ENCODE measurements at regions of chr3 and their contacts with region 1.

Region 1: DNA sequence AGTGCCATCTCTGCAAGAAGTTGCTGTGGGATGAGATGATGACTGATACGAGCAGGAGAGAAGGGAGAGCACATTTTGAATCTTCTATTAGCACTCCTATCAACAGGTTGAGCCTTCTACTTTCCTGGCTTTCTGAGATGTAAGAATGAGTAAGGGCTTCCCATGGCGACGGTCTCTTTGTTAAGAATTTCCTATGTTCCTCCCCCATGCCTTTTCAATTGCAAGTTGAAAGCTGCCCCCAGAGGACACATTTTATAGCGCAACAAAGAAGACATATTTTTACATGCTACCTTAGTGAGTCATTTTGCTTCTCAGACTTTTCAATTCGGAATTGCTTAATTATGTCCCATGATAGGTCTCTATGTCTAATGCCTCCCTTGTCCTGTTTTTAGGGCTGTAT is 71.3 kb upstream of the LRTM1 start:
- DNase-seq: peak; percentile 33 to 71
- H3K4me3 ChIP-seq: no peak overlapping the region
- H3K27ac ChIP-seq: no peak overlapping the region
- H3K4me1 ChIP-seq: peaks cover 4% of the 10 kb centered on the region; the same call in 1 of the 2 replicates
- H3K27me3 ChIP-seq: no peaks in the 10 kb centered on the region
- CTCF ChIP-seq: peak; percentile 48; the same call in 1 of the 2 replicates

Region 2: GRCh38 chr3:54891548-54892120 is 107.5 kb before region 1 on chr3:
- CTCF ChIA-PET with region 1: no interaction called
- POLR2A ChIA-PET with region 1: interaction called, 5 read pairs
- intact Hi-C with region 1: loop called (anchors 2 kb)
- DNase-seq: peak; percentile 91 to 97
- H3K4me3 ChIP-seq: no peak overlapping the region; the same call in 1 of the 2 replicates
- H3K27ac ChIP-seq: peak overlapping the region; percentile 69
- H3K4me1 ChIP-seq: peaks cover 25% of the 10 kb centered on the region
- H3K27me3 ChIP-seq: no peaks in the 10 kb centered on the region
- CTCF ChIP-seq: peak; percentile 48

Measured in PC-9 (cell line).